ENCODE measurements at regions of chr19 and their contacts with region 1.

Region 1: GRCh38 chr19:37899966-37900365 is 6.4 kb downstream of the WDR87 start:
- DNase-seq: no peak
- ATAC-seq: no peak
- H3K4me3 ChIP-seq: no peak overlapping the region
- H3K4me3 Mint-ChIP-seq: no peak overlapping the region
- H3K27ac ChIP-seq: no peak overlapping the region
- H3K27ac Mint-ChIP-seq: no peak overlapping the region
- H3K4me1 ChIP-seq: no peaks in the 10 kb centered on the region
- H3K4me1 Mint-ChIP-seq: peaks cover 5% of the 10 kb centered on the region
- H3K27me3 ChIP-seq: no peaks in the 10 kb centered on the region
- H3K27me3 Mint-ChIP-seq: no peaks in the 10 kb centered on the region
- CTCF ChIP-seq: no peak

Region 2: GRCh38 chr19:38095411-38096308 is 195.7 kb after region 1 on chr19:
- CTCF ChIA-PET with region 1: no interaction called
- POLR2A ChIA-PET with region 1: no interaction called
- intact Hi-C with region 1: loop called (anchors 2 to 5 kb)
- DNase-seq: peak; percentile 24 to 73 (median 46)
- ATAC-seq: peak; percentile 51
- H3K4me3 ChIP-seq: no peak overlapping the region
- H3K4me3 Mint-ChIP-seq: no peak overlapping the region
- H3K27ac ChIP-seq: no peak overlapping the region
- H3K27ac Mint-ChIP-seq: no peak overlapping the region
- H3K4me1 ChIP-seq: no peaks in the 10 kb centered on the region
- H3K4me1 Mint-ChIP-seq: peaks cover 8% of the 10 kb centered on the region
- H3K27me3 ChIP-seq: no peaks in the 10 kb centered on the region
- H3K27me3 Mint-ChIP-seq: no peaks in the 10 kb centered on the region
- CTCF ChIP-seq: peak; percentile 75

Region 3: DNA sequence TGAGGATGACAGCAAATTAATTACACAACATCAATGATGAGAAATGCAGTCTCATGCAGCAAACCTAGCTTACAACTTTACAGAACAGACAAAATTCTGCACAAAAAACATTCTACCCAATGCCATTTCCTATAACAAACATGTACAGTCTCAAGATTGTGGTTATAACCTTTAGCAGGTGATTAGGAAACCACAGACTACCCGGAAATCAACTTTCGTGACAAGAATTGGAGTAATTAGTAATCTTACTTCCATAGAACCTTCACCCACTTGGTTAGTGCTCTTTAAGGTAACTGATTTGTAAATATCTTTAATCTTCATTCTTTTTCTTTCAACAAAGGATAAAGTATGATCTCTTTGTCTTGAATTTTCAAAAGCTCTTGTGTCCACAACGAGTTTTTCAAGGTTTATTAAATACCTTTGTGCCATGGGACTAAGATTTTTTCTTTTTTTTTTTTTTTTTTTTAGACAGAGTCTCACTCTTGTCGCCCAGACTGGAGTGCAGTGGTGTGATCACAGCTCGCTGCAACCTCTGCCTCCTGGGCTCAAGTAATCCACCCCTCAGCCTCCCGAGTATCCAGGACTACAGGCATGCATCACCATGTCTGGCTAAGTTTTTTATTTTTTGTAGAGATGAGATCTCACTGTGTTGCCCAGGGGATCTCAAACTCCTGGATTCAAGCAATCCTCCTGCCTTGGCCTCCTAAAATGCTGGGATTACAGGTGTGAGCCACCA is 639.0 kb after region 1 on chr19:
- CTCF ChIA-PET with region 1: no interaction called
- POLR2A ChIA-PET with region 1: no interaction called
- intact Hi-C with region 1: no loop called
- DNase-seq: peak in 6 of 14 experiments; percentile 13 to 87 (median 68)
- ATAC-seq: peak; percentile 91
- H3K4me3 ChIP-seq: no peak overlapping the region
- H3K4me3 Mint-ChIP-seq: peak overlapping the region; percentile 46
- H3K27ac ChIP-seq: no peak overlapping the region
- H3K27ac Mint-ChIP-seq: peak overlapping the region; percentile 74
- H3K4me1 ChIP-seq: peaks cover 46% of the 10 kb centered on the region
- H3K4me1 Mint-ChIP-seq: peaks cover 48% of the 10 kb centered on the region
- H3K27me3 ChIP-seq: no peaks in the 10 kb centered on the region
- H3K27me3 Mint-ChIP-seq: no peaks in the 10 kb centered on the region
- CTCF ChIP-seq: no peak

Measured in CD4-positive, alpha-beta T cell (primary cell).